Activated B cell treated with CpG ODN at 0.5 μM for 24 hours (primary cell): ENCODE measurements at regions of chr19 and their contacts with region 1.

Region 1: GRCh38 chr19:49512970-49513745 is 697 bp downstream of the FCGRT start:
- DNase-seq: peak; percentile 53
- ATAC-seq: peak; percentile 81
- H3K4me3 Mint-ChIP-seq: peak overlapping the region; percentile 85
- H3K27ac Mint-ChIP-seq: peak overlapping the region; percentile 85
- H3K4me1 Mint-ChIP-seq: peaks cover 36% of the 10 kb centered on the region
- H3K27me3 Mint-ChIP-seq: no peaks in the 10 kb centered on the region
- CTCF ChIP-seq: no peak

Region 2: DNA sequence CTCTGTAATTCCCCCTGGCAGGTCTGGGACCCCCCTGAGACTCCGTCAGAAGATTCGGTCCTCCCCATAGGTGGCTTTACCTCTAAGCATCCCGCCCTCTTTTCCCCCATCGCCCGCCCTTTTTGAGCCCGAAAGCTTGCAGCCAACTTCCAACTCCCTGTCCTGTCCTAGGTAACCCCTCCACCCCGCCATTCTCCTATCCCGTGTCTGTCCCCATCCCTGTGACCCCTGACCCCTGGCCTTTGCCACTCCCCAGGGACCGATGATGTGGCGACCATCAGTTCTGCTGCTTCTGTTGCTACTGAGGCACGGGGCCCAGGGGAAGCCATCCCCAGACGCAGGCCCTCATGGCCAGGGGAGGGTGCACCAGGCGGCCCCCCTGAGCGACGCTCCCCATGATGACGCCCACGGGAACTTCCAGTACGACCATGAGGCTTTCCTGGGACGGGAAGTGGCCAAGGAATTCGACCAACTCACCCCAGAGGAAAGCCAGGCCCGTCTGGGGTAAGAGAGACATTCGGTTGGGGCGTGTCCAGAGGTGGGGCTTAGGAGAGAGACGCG is 15.1 kb after region 1 on chr19:
- CTCF ChIA-PET with region 1: no interaction called
- POLR2A ChIA-PET with region 1: interaction called, 8 read pairs
- intact Hi-C with region 1: loop called (anchors 2 kb)
- DNase-seq: no peak
- ATAC-seq: no peak
- H3K4me3 Mint-ChIP-seq: peak overlapping the region; percentile 75
- H3K27ac Mint-ChIP-seq: no peak overlapping the region
- H3K4me1 Mint-ChIP-seq: peaks cover 16% of the 10 kb centered on the region
- H3K27me3 Mint-ChIP-seq: no peaks in the 10 kb centered on the region
- CTCF ChIP-seq: no peak

Region 3: DNA sequence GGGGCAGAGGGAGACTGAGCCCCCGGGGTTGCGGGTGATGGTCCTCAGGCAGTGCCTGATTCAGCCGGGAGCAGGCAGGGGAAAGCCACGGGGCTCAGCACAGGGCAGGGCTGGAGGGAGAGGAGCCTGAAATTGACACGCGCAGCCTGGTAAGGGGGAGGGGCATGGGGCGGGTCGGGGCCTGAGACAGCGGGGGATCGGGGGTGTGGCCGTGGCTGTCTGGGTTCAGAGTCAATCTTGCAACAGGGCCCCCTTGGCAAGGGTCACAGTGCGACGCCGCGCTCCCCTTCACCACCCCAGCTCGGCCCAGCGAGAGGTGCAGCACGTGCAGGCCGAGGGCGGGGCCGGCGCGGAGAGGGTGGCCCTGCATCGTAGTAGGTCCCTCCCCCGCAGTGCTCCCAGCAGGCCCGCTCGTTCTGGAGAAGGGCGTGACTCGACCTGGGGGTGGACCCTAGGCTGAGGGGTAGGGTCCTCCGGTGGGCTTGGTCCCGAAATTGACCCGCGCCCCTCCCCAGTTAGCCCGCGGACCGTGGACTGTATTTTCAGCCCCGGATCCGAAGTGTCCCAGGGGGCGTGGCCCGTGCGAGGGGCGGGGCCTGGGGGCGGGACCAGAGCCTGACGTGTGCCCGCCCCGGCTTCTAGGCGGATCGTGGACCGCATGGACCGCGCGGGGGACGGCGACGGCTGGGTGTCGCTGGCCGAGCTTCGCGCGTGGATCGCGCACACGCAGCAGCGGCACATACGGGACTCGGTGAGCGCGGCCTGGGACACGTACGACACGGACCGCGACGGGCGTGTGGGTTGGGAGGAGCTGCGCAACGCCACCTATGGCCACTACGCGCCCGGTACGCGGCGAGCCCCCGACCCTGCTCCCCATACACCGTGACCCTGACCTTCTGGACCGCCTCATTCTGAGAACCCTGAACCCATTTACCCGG is 20.7 kb after region 1 on chr19:
- CTCF ChIA-PET with region 1: no interaction called
- POLR2A ChIA-PET with region 1: interaction called, 6 read pairs
- intact Hi-C with region 1: loop called (anchors 2 kb)
- DNase-seq: peak; percentile 93
- ATAC-seq: peak; percentile 87
- H3K4me3 Mint-ChIP-seq: peak overlapping the region; percentile 82
- H3K27ac Mint-ChIP-seq: no peak overlapping the region
- H3K4me1 Mint-ChIP-seq: peaks cover 43% of the 10 kb centered on the region
- H3K27me3 Mint-ChIP-seq: no peaks in the 10 kb centered on the region
- CTCF ChIP-seq: no peak